Panc1 (cell line): ENCODE measurements at regions of chr21 and their contacts with region 1.

Region 1: GRCh38 chr21:30168086-30168485 is 1.5 kb upstream of the CLDN17 start:
- DNase-seq: no peak
- ATAC-seq: no peak
- H3K4me3 ChIP-seq: no peak overlapping the region
- H3K27ac ChIP-seq: no peak overlapping the region
- H3K4me1 ChIP-seq: no peaks in the 10 kb centered on the region
- H3K27me3 ChIP-seq: no peaks in the 10 kb centered on the region
- CTCF ChIP-seq: no peak

Region 2: DNA sequence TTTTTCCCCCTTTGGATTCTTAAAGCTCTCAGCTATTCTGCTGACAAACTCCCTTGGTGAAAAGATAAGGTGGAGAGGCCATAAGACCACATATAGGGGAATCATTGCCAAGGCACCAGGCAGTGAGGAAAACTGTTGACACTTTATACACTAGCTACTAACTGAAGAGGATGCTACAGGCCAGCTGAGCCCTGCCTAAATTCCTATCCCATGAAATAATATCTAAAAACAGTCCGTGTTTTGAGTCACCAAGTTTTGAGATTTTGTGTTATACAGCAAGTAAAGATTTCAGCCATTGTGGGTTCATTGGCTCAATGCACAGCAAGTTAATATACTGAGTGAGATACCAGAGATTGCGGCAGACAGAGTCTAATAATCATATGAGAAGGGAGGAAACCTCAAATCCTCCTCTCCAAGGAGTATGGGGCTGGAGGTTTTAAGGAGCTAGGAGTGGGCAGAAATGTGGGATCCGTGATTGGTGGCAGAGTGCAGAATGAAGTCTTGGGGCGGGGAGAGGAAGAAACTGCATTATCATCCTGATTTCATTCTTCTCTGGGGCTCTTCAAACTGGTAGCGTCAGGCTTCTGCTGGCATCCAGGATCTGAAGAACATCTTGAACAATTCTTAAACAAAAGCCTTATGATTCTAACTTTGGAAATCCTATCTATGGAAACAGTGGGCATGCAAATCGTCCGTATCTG is 38.6 kb after region 1 on chr21:
- CTCF ChIA-PET with region 1: interaction called, 12 read pairs
- POLR2A ChIA-PET with region 1: no interaction called
- in situ Hi-C with region 1: no loop called
- intact Hi-C with region 1: no loop called
- DNase-seq: no peak
- ATAC-seq: no peak
- H3K4me3 ChIP-seq: no peak overlapping the region
- H3K27ac ChIP-seq: no peak overlapping the region
- H3K4me1 ChIP-seq: no peaks in the 10 kb centered on the region
- H3K27me3 ChIP-seq: no peaks in the 10 kb centered on the region
- CTCF ChIP-seq: no peak

Region 3: GRCh38 chr21:30240646-30241045 is 72.6 kb after region 1 on chr21:
- CTCF ChIA-PET with region 1: no interaction called
- POLR2A ChIA-PET with region 1: no interaction called
- in situ Hi-C with region 1: no loop called
- intact Hi-C with region 1: no loop called
- DNase-seq: no peak
- ATAC-seq: no peak
- H3K4me3 ChIP-seq: no peak overlapping the region
- H3K27ac ChIP-seq: no peak overlapping the region
- H3K4me1 ChIP-seq: no peaks in the 10 kb centered on the region
- H3K27me3 ChIP-seq: no peaks in the 10 kb centered on the region
- CTCF ChIP-seq: no peak